HepG2 (cell line): ENCODE measurements at regions of chr16 and their contacts with region 1.

Region 1: GRCh38 chr16:27867122-27868110 is 196.1 kb downstream of the GSG1L start:
- DNase-seq: peak; percentile 78
- ATAC-seq: peak; percentile 92
- H3K4me3 ChIP-seq: no peak overlapping the region
- H3K27ac ChIP-seq: no peak overlapping the region
- H3K4me1 ChIP-seq: no peaks in the 10 kb centered on the region
- H3K27me3 ChIP-seq: peaks cover 3 to 5% of the 10 kb centered on the region in 2 experiments; a peak in 1 of 5 replicates
- CTCF ChIP-seq: peak; percentile 93
- EP300 ChIP-seq: no peak
- POLR2A ChIP-seq: no peak
- RAD21 ChIP-seq: peak; percentile 70

Region 2: GRCh38 chr16:27600381-27600780 is 267.0 kb before region 1 on chr16:
- CTCF ChIA-PET with region 1: interaction called, 6 read pairs
- POLR2A ChIA-PET with region 1: no interaction called
- in situ Hi-C with region 1: no loop called
- intact Hi-C with region 1: loop called (anchors 1 kb)
- DNase-seq: no peak
- ATAC-seq: no peak
- H3K4me3 ChIP-seq: no peak overlapping the region
- H3K27ac ChIP-seq: no peak overlapping the region
- H3K4me1 ChIP-seq: peaks cover 7% of the 10 kb centered on the region
- H3K27me3 ChIP-seq: no peaks in the 10 kb centered on the region
- CTCF ChIP-seq: no peak
- EP300 ChIP-seq: no peak
- POLR2A ChIP-seq: no peak
- RAD21 ChIP-seq: no peak

Region 3: GRCh38 chr16:27639561-27640276 is 227.7 kb before region 1 on chr16:
- CTCF ChIA-PET with region 1: interaction called, 3 read pairs
- POLR2A ChIA-PET with region 1: no interaction called
- in situ Hi-C with region 1: loop called (anchors 5 kb)
- intact Hi-C with region 1: loop called (anchors 1 kb)
- DNase-seq: peak; percentile 58
- ATAC-seq: peak; percentile 88
- H3K4me3 ChIP-seq: no peak overlapping the region
- H3K27ac ChIP-seq: no peak overlapping the region
- H3K4me1 ChIP-seq: no peaks in the 10 kb centered on the region
- H3K27me3 ChIP-seq: no peaks in the 10 kb centered on the region
- CTCF ChIP-seq: peak; percentile 84
- EP300 ChIP-seq: no peak
- POLR2A ChIP-seq: no peak
- RAD21 ChIP-seq: peak; percentile 47; the same call in 1 of the 2 replicates

Region 4: DNA sequence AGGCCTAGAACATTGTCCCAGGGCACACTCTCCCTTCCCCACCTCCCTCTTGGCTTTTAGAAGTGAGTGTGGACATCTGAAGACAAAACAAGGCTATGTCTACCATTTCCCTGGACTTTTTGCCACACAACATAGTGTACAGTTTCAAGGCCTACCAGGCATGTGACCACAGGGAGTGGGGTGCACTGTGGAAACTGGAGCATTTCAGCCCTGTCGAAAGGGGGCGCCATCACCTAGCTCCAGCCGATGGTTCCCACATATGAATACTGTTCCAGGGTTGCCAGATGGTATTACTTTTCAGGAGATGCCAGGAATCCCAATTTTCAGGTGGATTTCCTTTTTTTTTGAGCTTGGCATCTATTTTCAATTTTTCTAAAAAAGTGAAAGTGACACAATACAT is 176.8 kb before region 1 on chr16:
- CTCF ChIA-PET with region 1: no interaction called
- POLR2A ChIA-PET with region 1: no interaction called
- in situ Hi-C with region 1: no loop called
- intact Hi-C with region 1: loop called (anchors 2 kb)
- DNase-seq: peak; percentile 26
- ATAC-seq: peak; percentile 87
- H3K4me3 ChIP-seq: no peak overlapping the region
- H3K27ac ChIP-seq: no peak overlapping the region
- H3K4me1 ChIP-seq: no peaks in the 10 kb centered on the region
- H3K27me3 ChIP-seq: no peaks in the 10 kb centered on the region
- CTCF ChIP-seq: peak; percentile 82
- EP300 ChIP-seq: no peak
- POLR2A ChIP-seq: no peak
- RAD21 ChIP-seq: no peak

Region 5: GRCh38 chr16:27779641-27780164 is 87.7 kb before region 1 on chr16:
- CTCF ChIA-PET with region 1: interaction called, 5 read pairs
- POLR2A ChIA-PET with region 1: no interaction called
- in situ Hi-C with region 1: loop called (anchors 5 kb)
- intact Hi-C with region 1: loop called (anchors 2 kb)
- DNase-seq: peak; percentile 42
- ATAC-seq: peak; percentile 72
- H3K4me3 ChIP-seq: no peak overlapping the region
- H3K27ac ChIP-seq: no peak overlapping the region
- H3K4me1 ChIP-seq: no peaks in the 10 kb centered on the region
- H3K27me3 ChIP-seq: no peaks in the 10 kb centered on the region
- CTCF ChIP-seq: peak; percentile 61
- EP300 ChIP-seq: no peak
- POLR2A ChIP-seq: no peak
- RAD21 ChIP-seq: peak; percentile 56